ENCODE measurements at regions of chr9 and their contacts with region 1.

Region 1: DNA sequence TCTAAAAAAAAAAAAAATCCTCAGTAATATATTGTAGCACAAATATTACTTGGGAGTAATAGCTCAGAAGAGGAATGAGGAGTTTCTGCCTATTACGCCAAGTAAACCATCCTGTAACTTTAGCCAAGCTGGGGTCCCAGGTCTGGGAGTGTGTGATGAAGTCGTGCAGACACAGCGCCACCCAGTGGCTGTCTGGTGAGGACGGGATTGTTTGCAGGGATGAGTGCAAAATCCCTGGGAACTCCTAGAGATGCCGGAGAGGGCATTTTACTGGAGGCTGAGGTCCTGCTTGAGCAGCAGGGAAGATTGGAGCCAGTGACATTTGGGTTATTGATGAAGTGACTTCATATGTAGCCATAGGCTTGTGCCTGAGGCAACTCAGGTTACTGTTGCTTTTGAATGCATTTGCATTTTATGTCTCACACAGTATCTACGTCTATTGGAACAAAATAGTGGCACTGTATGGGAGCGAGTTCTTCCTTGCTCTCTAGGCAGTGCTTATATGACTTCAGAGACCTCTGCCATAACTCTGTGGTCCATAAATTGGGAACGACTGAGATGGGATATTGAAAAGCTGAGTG is 72.8 kb downstream of the PSAT1 start:
- DNase-seq: peak; percentile 69
- H3K4me3 ChIP-seq: no peak overlapping the region
- H3K27ac ChIP-seq: no peak overlapping the region
- H3K4me1 ChIP-seq: peaks cover 6% of the 10 kb centered on the region
- CTCF ChIP-seq: peak; percentile 99

Region 2: GRCh38 chr9:78121488-78121887 is 248.2 kb before region 1 on chr9:
- CTCF ChIA-PET with region 1: no interaction called
- POLR2A ChIA-PET with region 1: no interaction called
- intact Hi-C with region 1: loop called (anchors 10 kb)
- DNase-seq: peak; percentile 36
- H3K4me3 ChIP-seq: no peak overlapping the region
- H3K27ac ChIP-seq: no peak overlapping the region
- H3K4me1 ChIP-seq: peaks cover 7% of the 10 kb centered on the region
- CTCF ChIP-seq: peak; percentile 83

Region 3: GRCh38 chr9:78261403-78262001 is 108.2 kb before region 1 on chr9:
- CTCF ChIA-PET with region 1: interaction called, 3 read pairs
- POLR2A ChIA-PET with region 1: interaction called, 4 read pairs
- intact Hi-C with region 1: loop called (anchors 1 kb)
- DNase-seq: peak; percentile 54
- H3K4me3 ChIP-seq: no peak overlapping the region
- H3K27ac ChIP-seq: no peak overlapping the region
- H3K4me1 ChIP-seq: no peaks in the 10 kb centered on the region
- CTCF ChIP-seq: peak; percentile 91